CD14-positive monocyte (primary cell): ENCODE measurements at regions of chr19 and their contacts with region 1.

Region 1: DNA sequence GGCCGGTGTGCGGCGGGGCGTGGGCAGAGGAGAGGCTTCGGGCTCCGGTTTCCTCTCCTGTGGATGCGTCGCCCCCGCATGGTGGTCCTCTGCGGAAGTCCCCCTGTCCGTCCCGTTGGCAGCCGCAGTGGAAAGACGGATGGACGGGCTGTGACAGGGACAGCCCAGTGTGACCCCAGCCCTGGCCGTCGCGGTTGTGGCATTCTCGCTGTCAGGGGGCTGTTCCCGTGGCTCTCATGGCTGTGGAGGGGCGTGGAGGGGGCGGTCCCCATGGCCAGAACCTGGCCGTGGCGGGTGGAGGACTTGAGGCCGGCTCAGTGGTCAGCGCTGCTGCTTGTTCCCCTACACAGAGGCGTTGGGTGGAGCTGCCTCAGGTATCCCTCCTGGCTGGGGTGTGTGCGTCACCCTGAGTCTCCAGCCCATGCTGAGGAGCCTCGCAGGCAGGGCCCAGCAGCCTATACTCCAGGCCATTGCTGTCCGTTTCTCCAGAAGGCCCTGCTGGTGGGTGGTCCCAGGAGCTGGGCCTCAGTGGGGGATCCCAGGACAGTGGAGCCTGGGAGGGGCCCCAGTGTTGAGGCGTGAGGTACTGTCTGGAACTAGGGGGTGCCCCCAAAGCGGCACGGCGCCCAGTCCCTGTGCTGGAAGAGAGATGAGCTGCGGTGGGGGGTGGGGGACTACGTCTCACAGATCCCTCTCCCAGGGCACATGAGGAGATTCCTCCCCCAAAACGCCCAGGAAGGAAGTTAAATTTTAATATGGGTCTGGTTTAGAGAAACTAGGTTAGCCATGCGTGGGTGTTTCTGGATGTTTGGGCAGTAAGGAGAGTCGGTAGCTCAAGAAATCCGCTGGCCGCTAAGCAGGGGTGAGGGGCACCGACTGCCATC is 20.3 kb downstream of the CSNK1G2 start:
- DNase-seq: no peak
- H3K4me3 ChIP-seq: no peak overlapping the region
- H3K4me3 Mint-ChIP-seq: no peak overlapping the region
- H3K27ac ChIP-seq: no peak overlapping the region
- H3K27ac Mint-ChIP-seq: peak overlapping the region in 4 of 7 donors; percentile 15 to 54 (median 28)
- H3K4me1 ChIP-seq: no peaks in the 10 kb centered on the region
- H3K4me1 Mint-ChIP-seq: peaks cover 3% of the 10 kb centered on the region
- H3K27me3 ChIP-seq: no peaks in the 10 kb centered on the region
- H3K27me3 Mint-ChIP-seq: peaks cover 0 to 1% (median 0%) of the 10 kb centered on the region in 3 donors
- CTCF ChIP-seq: no peak

Region 2: GRCh38 chr19:1929021-1929742 is 32.1 kb before region 1 on chr19:
- intact Hi-C with region 1: loop called in 1 of 2 experiments (anchors 5 kb)
- DNase-seq: peak; percentile 69 to 78 (median 75)
- H3K4me3 ChIP-seq: peak overlapping the region; percentile 16 to 69 (median 32)
- H3K4me3 Mint-ChIP-seq: peak overlapping the region; percentile 78 to 89
- H3K27ac ChIP-seq: no peak overlapping the region
- H3K27ac Mint-ChIP-seq: peak overlapping the region in 6 of 7 donors; percentile 5 to 88 (median 66)
- H3K4me1 ChIP-seq: peaks cover 20 to 30% of the 10 kb centered on the region in 2 donors
- H3K4me1 Mint-ChIP-seq: peaks cover 31% of the 10 kb centered on the region
- H3K27me3 ChIP-seq: peaks cover 0 to 4% of the 10 kb centered on the region in 2 donors
- H3K27me3 Mint-ChIP-seq: peaks cover 10 to 15% (median 12%) of the 10 kb centered on the region in 3 donors
- CTCF ChIP-seq: peak; percentile 90